Naive thymus-derived CD4-positive, alpha-beta T cell (primary cell): ENCODE measurements at regions of chr19 and their contacts with region 1.

Region 1: GRCh38 chr19:42423462-42424344 is 3.5 kb downstream of the LIPE start:
- DNase-seq: peak; percentile 79 to 94 (median 94)
- ATAC-seq: peak; percentile 95
- H3K4me3 ChIP-seq: peak overlapping the region; percentile 70
- H3K4me3 Mint-ChIP-seq: peak overlapping the region; percentile 89 to 100 (median 98)
- H3K27ac ChIP-seq: peak overlapping the region; percentile 77
- H3K27ac Mint-ChIP-seq: peak overlapping the region; percentile 72 to 96 (median 87)
- H3K4me1 ChIP-seq: peaks cover 21 to 30% of the 10 kb centered on the region in 2 donors
- H3K4me1 Mint-ChIP-seq: peaks cover 30 to 46% (median 39%) of the 10 kb centered on the region in 7 donors
- H3K27me3 ChIP-seq: no peaks in the 10 kb centered on the region
- H3K27me3 Mint-ChIP-seq: peaks cover 0 to 4% (median 0%) of the 10 kb centered on the region in 5 donors

Region 2: DNA sequence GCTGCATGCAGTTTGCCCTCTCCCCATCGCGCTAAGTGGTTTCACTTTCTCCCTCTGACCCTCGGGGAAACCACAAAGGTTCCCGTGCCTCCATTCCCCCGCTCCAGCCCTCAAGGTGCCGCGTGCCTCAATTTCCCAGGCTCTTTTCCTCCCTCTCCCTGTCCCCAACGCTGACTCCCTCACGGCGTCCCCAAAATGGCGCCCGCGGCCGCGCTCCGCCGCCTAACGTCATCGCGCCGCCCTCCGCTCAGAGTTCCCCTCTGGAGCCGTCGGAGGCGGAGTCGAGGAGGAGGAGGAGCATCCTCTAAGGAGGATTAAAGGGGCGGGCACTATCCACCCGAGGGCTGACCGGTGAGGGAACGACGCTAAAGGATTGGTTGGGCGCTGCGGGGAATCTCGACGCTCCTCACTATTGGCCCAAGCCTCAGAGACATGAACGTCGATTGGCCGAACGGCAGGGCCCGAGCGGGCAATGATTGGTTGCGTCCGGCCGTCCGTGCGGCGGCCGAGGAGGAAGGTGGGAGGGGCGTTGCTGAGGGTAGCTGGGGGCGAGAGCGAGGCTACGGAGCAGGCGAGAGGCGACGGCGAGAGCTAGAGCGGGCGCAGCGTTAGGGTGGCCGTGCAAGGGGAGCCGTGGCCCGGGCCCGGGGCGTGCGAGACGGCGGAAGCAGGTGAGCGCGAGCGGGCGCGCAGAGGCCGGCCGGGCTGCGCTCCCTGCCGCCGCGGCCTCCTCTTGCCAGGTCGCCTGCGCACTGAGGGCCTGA is 347.9 kb before region 1 on chr19 and contains the start of gene ZNF574:
- CTCF ChIA-PET with region 1: no interaction called
- POLR2A ChIA-PET with region 1: no interaction called
- intact Hi-C with region 1: loop called in 1 of 2 experiments (anchors 5 kb)
- DNase-seq: peak; percentile 91 to 99 (median 98)
- ATAC-seq: peak; percentile 98
- H3K4me3 ChIP-seq: peak within 1 kb of the TSS; percentile 70
- H3K4me3 Mint-ChIP-seq: peak within 1 kb of the TSS; percentile 92 to 100 (median 98)
- H3K27ac ChIP-seq: peak within 1 kb of the TSS; percentile 97
- H3K27ac Mint-ChIP-seq: peak within 1 kb of the TSS; percentile 99 to 100 (median 100)
- H3K4me1 ChIP-seq: peaks cover 19 to 24% of the 10 kb centered on the region in 2 donors
- H3K4me1 Mint-ChIP-seq: peaks cover 26 to 44% (median 38%) of the 10 kb centered on the region in 7 donors
- H3K27me3 ChIP-seq: no peaks in the 10 kb centered on the region
- H3K27me3 Mint-ChIP-seq: peaks cover 0 to 13% (median 0%) of the 10 kb centered on the region in 5 donors
- total RNA-seq, gene ZNF574: 17.6 to 26.7 (median 20.9) TPM

Region 3: GRCh38 chr19:42283143-42284065 is 140.3 kb before region 1 on chr19:
- CTCF ChIA-PET with region 1: no interaction called
- POLR2A ChIA-PET with region 1: no interaction called
- intact Hi-C with region 1: no loop called
- DNase-seq: peak; percentile 93 to 97 (median 95)
- ATAC-seq: peak; percentile 83
- H3K4me3 ChIP-seq: peak overlapping the region; percentile 50
- H3K4me3 Mint-ChIP-seq: peak overlapping the region in 1 of 10 donors; percentile 0
- H3K27ac ChIP-seq: peak overlapping the region; percentile 83
- H3K27ac Mint-ChIP-seq: no peak overlapping the region
- H3K4me1 ChIP-seq: peaks cover 42 to 45% of the 10 kb centered on the region in 2 donors
- H3K4me1 Mint-ChIP-seq: peaks cover 22 to 44% (median 32%) of the 10 kb centered on the region in 7 donors
- H3K27me3 ChIP-seq: no peaks in the 10 kb centered on the region
- H3K27me3 Mint-ChIP-seq: no peaks in the 10 kb centered on the region

Region 4: GRCh38 chr19:42386974-42387707 is 36.6 kb before region 1 on chr19:
- CTCF ChIA-PET with region 1: no interaction called
- POLR2A ChIA-PET with region 1: interaction called, 4 read pairs
- intact Hi-C with region 1: loop called in 1 of 2 experiments (anchors 1 kb)
- DNase-seq: peak; percentile 44 to 74 (median 68)
- ATAC-seq: peak; percentile 94
- H3K4me3 ChIP-seq: peak overlapping the region; percentile 48
- H3K4me3 Mint-ChIP-seq: peak overlapping the region; percentile 28 to 77 (median 60)
- H3K27ac ChIP-seq: no peak overlapping the region
- H3K27ac Mint-ChIP-seq: peak overlapping the region in 1 of 9 donors; percentile 31
- H3K4me1 ChIP-seq: no peaks in the 10 kb centered on the region
- H3K4me1 Mint-ChIP-seq: peaks cover 5 to 8% (median 6%) of the 10 kb centered on the region in 7 donors
- H3K27me3 ChIP-seq: no peaks in the 10 kb centered on the region
- H3K27me3 Mint-ChIP-seq: peaks cover 28 to 48% (median 45%) of the 10 kb centered on the region in 5 donors

Region 5: DNA sequence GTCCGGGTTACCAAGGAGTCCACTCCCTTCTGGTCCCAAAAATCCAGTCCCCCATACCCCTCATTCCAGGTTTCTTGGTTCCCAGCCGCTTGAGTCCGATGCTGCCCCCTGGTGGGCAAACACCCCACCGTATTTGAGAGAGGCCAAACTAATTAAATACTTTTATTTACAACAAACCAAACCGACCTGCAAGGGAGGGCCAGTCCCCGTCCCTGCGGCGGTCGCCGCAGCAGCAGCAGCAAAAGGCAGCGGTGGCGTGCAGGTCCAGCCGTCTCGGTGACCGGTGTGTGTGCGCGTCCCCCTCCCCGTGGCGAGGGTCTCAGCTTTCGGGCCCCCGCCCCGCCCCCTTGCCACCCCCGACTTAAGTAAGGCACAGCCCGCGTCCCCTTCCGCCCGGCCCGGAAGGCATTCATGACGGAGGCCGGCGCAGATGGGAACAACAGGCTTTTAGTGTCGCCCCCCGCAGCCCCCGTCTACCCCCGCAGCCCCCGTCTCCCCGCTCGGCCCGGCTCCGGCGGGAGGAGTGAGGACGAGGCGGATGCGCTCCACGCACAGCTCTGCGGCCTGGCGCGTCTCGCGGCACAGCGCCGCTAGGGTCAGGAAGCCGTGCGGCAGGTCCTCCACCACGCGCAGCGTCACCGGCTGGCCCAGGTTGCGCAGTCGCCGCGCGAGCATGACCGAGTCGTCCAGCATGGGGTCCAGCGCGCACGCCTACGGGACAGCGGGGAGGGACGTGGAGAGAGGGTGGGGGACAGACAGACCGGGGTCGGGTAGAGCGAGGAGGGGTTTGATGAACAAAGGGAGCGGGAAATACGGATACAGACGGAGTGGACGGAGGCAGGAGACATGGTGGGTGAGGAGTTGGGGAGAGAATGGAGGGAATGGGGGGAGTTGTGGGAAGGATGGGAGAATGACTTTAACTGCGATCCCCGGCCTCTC is 22.1 kb before region 1 on chr19:
- CTCF ChIA-PET with region 1: interaction called, 6 read pairs
- POLR2A ChIA-PET with region 1: interaction called, 8 read pairs
- intact Hi-C with region 1: loop called (anchors 1 kb)
- DNase-seq: peak; percentile 46 to 72 (median 64)
- ATAC-seq: peak; percentile 78
- H3K4me3 ChIP-seq: peak overlapping the region; percentile 62
- H3K4me3 Mint-ChIP-seq: peak overlapping the region; percentile 79 to 88 (median 84)
- H3K27ac ChIP-seq: peak overlapping the region; percentile 68
- H3K27ac Mint-ChIP-seq: peak overlapping the region; percentile 49 to 88 (median 81)
- H3K4me1 ChIP-seq: peaks cover 12 to 13% of the 10 kb centered on the region in 2 donors
- H3K4me1 Mint-ChIP-seq: peaks cover 25 to 51% (median 42%) of the 10 kb centered on the region in 7 donors
- H3K27me3 ChIP-seq: no peaks in the 10 kb centered on the region
- H3K27me3 Mint-ChIP-seq: no peaks in the 10 kb centered on the region